Natural killer cell (primary cell): ENCODE measurements at regions of chr6 and their contacts with region 1.

Region 1: DNA sequence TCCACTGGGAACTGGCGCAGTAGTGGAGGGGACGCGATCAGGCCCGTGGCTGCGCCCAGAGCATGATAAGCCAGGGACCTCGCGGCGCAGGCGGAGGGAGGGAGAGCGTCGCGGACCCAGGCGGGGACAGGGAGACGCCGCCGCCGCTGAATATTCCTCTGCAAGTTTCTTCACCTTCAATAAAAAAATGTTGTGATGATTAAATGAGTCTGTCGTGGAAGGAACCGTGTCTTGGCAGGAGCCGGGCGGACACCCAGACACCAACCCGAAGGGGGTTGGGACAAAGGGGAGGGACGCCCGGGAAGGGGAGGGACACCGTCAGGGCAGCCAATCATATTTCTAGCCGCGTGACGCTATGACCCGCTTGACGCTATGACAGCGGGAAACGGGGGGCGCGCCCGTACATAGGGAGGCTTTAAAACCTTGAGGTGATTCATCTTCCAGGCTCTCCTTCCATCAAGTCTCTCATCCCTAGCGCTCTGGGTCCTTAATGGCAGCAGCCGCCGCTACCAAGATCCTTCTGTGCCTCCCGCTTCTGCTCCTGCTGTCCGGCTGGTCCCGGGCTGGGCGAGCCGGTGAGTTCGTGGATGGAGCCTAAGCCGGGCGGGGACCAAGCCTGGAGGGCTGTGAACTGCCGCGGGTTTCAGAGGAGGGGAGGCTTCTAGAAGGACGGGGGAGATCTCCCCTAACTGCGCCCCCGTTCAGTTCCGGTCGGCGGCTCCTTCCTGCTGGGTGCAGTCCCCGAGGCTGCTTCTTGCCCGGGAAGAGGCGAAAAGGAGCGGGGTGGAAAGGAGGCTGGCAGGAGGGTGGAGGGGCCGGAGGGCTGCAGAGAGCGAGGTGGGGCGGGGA is at the start of gene ULBP2:
- DNase-seq: peak; percentile 91 to 97
- ATAC-seq: peak; percentile 87 to 96 (median 87)
- H3K4me3 ChIP-seq: peak within 1 kb of the TSS; percentile 61
- H3K4me3 Mint-ChIP-seq: peak within 1 kb of the TSS; percentile 98
- H3K27ac ChIP-seq: no peak within 1 kb of the TSS
- H3K27ac Mint-ChIP-seq: peak within 1 kb of the TSS; percentile 86 to 89
- H3K4me1 ChIP-seq: peaks cover 38% of the 10 kb centered on the region
- H3K4me1 Mint-ChIP-seq: peaks cover 13 to 31% of the 10 kb centered on the region in 2 donors
- H3K27me3 ChIP-seq: peaks cover 42% of the 10 kb centered on the region
- H3K27me3 Mint-ChIP-seq: peaks cover 35 to 40% of the 10 kb centered on the region in 2 donors
- CTCF ChIP-seq: no peak
- total RNA-seq, gene ULBP2: 0.98 to 2.4 (median 2.4) TPM

Region 2: GRCh38 chr6:149903938-149904611 is 37.7 kb before region 1 on chr6:
- intact Hi-C with region 1: no loop called
- DNase-seq: no peak
- ATAC-seq: no peak
- H3K4me3 ChIP-seq: no peak overlapping the region
- H3K4me3 Mint-ChIP-seq: no peak overlapping the region
- H3K27ac ChIP-seq: no peak overlapping the region
- H3K27ac Mint-ChIP-seq: no peak overlapping the region
- H3K4me1 ChIP-seq: no peaks in the 10 kb centered on the region
- H3K4me1 Mint-ChIP-seq: no peaks in the 10 kb centered on the region
- H3K27me3 ChIP-seq: no peaks in the 10 kb centered on the region
- H3K27me3 Mint-ChIP-seq: peaks cover 5 to 8% of the 10 kb centered on the region in 2 donors
- CTCF ChIP-seq: no peak

Region 3: DNA sequence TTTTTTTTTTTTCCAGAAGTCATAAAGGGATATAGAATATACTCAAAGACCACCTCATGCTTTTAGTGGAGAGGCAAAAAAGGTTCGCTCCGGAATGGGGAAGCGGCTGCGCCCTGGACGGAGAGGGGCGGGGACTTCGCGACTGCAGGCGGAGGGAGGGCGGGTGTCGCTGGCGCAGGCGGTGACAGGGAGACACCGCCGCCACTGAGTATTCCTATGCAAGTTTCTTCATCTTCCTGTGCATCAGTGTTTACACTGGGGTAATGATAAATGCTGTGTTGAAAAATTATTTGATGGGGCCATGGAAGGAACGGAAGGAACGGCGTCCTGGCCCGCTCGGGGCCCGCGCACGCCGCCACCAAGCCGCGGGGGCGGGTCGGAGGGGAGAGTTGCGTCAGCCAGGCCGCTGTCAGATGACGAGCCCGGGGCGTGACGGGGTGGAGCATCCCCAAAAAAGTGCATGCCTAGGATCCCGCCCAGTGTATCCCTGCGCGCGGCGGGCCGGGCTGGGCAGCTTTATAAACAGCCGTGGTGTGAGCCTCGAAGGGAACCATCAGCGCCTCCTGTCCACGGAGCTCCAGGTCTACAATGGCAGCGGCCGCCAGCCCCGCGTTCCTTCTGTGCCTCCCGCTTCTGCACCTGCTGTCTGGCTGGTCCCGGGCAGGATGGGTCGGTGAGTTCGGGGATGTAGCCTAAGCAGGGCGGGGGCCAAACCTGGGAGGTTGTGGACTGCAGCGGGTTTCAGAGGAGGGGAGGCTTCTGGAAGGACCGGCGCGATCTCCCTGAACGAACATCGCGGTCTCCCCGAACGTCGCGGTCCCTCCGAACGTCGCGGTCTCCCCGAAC is 21.9 kb after region 1 on chr6 and contains the start of gene ULBP1:
- intact Hi-C with region 1: loop called (anchors 2 kb)
- DNase-seq: peak; percentile 59 to 83
- ATAC-seq: peak; percentile 68 to 78 (median 74)
- H3K4me3 ChIP-seq: peak within 1 kb of the TSS; percentile 52
- H3K4me3 Mint-ChIP-seq: peak within 1 kb of the TSS; percentile 96
- H3K27ac ChIP-seq: no peak within 1 kb of the TSS
- H3K27ac Mint-ChIP-seq: peak within 1 kb of the TSS; percentile 66 to 86
- H3K4me1 ChIP-seq: peaks cover 27% of the 10 kb centered on the region
- H3K4me1 Mint-ChIP-seq: peaks cover 24 to 32% of the 10 kb centered on the region in 2 donors
- H3K27me3 ChIP-seq: peaks cover 44% of the 10 kb centered on the region
- H3K27me3 Mint-ChIP-seq: peaks cover 72 to 90% of the 10 kb centered on the region in 2 donors
- CTCF ChIP-seq: no peak
- total RNA-seq, gene ULBP1: 0.18 to 0.23 TPM in 2 of 3 donors, not detected in the other

Region 4: DNA sequence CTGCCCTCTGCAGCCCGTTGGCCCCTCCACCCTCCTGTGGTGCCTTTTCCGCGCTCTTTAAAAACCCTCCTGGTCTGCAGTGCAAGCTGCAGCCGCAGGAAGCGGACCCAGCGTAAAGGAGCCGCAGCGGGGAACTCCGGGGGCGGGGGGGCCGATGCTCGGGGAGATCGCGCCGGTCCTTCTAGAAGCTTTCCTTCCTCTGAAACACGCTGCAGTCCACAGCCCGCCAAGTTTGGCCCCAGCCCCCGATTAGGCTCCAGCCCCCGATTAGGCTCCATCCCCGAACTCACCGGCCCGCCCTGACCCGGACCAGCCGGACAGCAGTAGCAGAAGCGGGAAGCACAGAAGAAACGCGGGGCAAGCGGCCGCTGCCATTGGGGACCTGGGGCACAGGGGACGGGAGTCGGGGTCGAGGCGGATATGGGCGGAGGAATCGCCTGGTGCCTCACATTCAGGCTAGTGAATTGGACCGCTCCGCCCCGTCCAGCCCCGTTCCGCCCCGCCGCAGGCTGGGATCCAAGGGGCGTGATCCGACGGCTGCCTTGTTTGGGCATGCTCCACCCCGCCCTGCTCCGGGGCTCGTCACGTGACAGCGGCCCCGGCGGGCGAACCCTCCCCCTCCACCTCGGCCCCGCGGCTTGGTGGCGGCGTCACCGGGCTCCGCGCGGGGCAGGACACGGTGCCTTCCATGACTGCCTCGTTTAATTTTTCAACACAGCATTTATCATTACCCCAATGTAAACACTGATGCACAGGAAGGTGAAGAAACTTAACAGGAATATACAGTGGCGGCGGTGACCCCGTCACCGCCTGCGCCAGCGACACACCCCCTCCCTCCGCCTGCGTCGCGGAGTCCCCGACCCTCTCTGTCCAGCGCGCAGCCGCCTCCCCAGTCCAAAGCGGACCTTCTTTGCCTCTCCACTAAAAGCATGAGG is 63.2 kb after region 1 on chr6:
- intact Hi-C with region 1: loop called (anchors 2 kb)
- DNase-seq: peak; percentile 86 to 94
- ATAC-seq: peak; percentile 81 to 92 (median 87)
- H3K4me3 ChIP-seq: peak overlapping the region; percentile 71
- H3K4me3 Mint-ChIP-seq: peak overlapping the region; percentile 90
- H3K27ac ChIP-seq: peak overlapping the region; percentile 80
- H3K27ac Mint-ChIP-seq: peak overlapping the region; percentile 80 to 95
- H3K4me1 ChIP-seq: peaks cover 51% of the 10 kb centered on the region
- H3K4me1 Mint-ChIP-seq: peaks cover 25 to 49% of the 10 kb centered on the region in 2 donors
- H3K27me3 ChIP-seq: peaks cover 12% of the 10 kb centered on the region
- H3K27me3 Mint-ChIP-seq: peaks cover 14 to 19% of the 10 kb centered on the region in 2 donors
- CTCF ChIP-seq: no peak

Region 5: DNA sequence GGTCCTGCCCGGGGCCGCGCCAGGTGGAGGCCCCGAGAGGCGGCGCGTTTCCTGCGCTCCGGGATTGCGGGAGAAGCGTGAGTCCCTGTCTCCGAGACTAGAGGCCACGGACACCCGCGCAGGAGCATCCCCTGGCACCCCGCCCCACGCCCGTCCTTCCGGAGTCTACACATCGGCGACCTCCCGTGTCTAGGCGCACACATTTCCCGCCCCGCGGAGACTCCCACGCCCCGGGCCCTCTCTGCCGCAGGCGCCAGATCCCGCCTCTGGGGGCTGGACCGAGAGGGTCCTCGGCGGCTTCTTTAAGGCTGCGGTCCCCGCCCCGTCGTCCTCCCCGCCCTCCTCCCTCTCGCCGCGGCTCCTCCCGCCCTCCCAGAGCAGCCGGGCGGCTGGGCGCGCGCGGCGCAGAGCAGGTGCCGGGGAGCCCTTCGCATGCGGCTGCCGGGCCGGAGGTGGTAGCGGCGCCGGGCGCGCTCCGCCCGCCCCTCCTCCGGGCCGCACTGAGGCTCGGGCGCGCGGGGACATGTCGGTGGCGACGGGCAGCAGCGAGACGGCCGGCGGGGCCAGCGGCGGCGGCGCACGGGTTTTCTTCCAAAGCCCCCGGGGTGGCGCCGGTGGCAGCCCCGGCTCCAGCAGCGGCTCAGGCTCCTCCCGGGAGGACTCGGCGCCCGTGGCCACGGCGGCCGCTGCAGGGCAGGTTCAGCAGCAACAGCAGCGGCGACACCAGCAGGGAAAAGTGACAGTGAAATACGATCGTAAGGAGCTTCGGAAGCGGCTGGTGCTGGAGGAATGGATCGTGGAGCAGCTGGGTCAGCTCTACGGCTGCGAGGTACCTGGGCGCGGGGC is 201.1 kb after region 1 on chr6 and contains the start of gene PPP1R14C:
- intact Hi-C with region 1: no loop called
- DNase-seq: peak in 1 of 2 donors; percentile 28
- ATAC-seq: peak in 2 of 3 donors; percentile 29 to 79
- H3K4me3 ChIP-seq: no peak within 1 kb of the TSS
- H3K4me3 Mint-ChIP-seq: peak within 1 kb of the TSS; percentile 62
- H3K27ac ChIP-seq: no peak within 1 kb of the TSS
- H3K27ac Mint-ChIP-seq: no peak within 1 kb of the TSS
- H3K4me1 ChIP-seq: peaks cover 22% of the 10 kb centered on the region
- H3K4me1 Mint-ChIP-seq: peaks cover 0 to 1% of the 10 kb centered on the region in 2 donors
- H3K27me3 ChIP-seq: peaks cover 36% of the 10 kb centered on the region
- H3K27me3 Mint-ChIP-seq: peaks cover 60 to 85% of the 10 kb centered on the region in 2 donors
- CTCF ChIP-seq: no peak
- total RNA-seq, gene PPP1R14C: not detected